Heart left ventricle (tissue), 16 donors: ENCODE measurements at regions of chr7 and their contacts with region 1.

Region 1: GRCh38 chr7:37342688-37343471 is 105.8 kb downstream of the ELMO1 start:
- DNase-seq: peak in 1 of 5 donors; percentile 48
- ATAC-seq: peak in 3 of 4 donors; percentile 45 to 70 (median 63)
- H3K4me3 ChIP-seq: peak overlapping the region in 4 of 12 donors; percentile 1 to 55 (median 28)
- H3K27ac ChIP-seq: peak overlapping the region in 4 of 12 donors; percentile 11 to 87 (median 36)
- H3K4me1 ChIP-seq: peaks cover 0 to 47% (median 16%) of the 10 kb centered on the region in 12 donors
- H3K27me3 ChIP-seq: no peaks in the 10 kb centered on the region
- CTCF ChIP-seq: peak in 1 of 12 donors; percentile 7
- POLR2A ChIP-seq: no peak

Region 2: DNA sequence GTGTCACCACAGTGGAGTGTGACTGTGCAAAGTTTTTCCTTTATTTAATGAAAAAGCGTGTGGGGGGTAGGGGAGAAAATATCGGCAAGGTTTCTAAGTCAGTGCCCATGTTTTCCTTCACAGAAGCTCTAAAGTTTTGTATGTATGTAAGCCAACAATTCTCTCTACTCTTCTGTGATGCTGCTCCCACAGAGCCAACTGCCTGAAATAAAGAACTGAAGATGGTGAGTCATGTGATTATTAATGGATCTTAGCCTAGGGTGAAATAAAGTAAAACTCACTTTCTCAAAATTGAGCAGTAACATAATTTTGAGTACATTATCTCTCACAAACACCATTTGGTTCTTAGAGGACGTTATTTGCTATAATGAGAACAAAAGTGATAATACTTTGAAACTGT is 38.0 kb before region 1 on chr7:
- intact Hi-C with region 1: loop called in 1 of 10 experiments (anchors 5 kb)
- DNase-seq: no peak
- ATAC-seq: no peak
- H3K4me3 ChIP-seq: no peak overlapping the region
- H3K27ac ChIP-seq: no peak overlapping the region
- H3K4me1 ChIP-seq: peaks cover 0 to 7% (median 0%) of the 10 kb centered on the region in 12 donors
- H3K27me3 ChIP-seq: no peaks in the 10 kb centered on the region
- CTCF ChIP-seq: no peak
- POLR2A ChIP-seq: no peak